ENCODE measurements at regions of chr5 and their contacts with region 1.

Region 1: GRCh38 chr5:64207978-64208377 is 42.3 kb downstream of the RNF180 start:
- DNase-seq: no peak
- ATAC-seq: no peak
- H3K4me3 ChIP-seq: no peak overlapping the region
- H3K27ac ChIP-seq: no peak overlapping the region
- H3K4me1 ChIP-seq: peaks cover 0 to 9% (median 1%) of the 10 kb centered on the region in 9 donors
- H3K27me3 ChIP-seq: no peaks in the 10 kb centered on the region
- CTCF ChIP-seq: peak in 7 of 9 donors; percentile 19 to 58 (median 39)

Region 2: DNA sequence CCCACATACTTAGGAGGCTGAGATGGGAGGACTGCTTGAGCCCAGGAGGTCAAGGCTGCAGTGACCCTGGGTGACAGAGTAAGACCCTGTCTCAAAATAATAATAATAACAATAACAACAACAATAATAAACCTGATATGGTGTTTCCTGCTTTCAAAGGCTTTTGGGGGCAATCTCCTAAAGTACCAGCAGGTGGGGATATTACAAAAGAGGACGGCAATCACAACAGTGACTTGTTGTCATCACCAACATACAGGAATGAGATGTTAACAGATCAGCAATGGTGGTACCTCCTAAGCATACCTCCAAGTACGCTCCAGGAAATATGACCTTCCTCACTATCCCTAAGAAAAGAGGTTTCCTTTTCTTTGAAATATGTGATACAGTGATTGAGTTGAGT is 133.4 kb before region 1 on chr5:
- intact Hi-C with region 1: loop called in 2 of 10 experiments (anchors 5 to 10 kb)
- DNase-seq: no peak
- ATAC-seq: peak in 1 of 8 donors; percentile 41
- H3K4me3 ChIP-seq: no peak overlapping the region
- H3K27ac ChIP-seq: no peak overlapping the region
- H3K4me1 ChIP-seq: no peaks in the 10 kb centered on the region
- H3K27me3 ChIP-seq: no peaks in the 10 kb centered on the region
- CTCF ChIP-seq: peak in 8 of 9 donors; percentile 20 to 65 (median 58)

Region 3: GRCh38 chr5:64147849-64148441 is 60.0 kb before region 1 on chr5:
- intact Hi-C with region 1: loop called (anchors 2 to 10 kb)
- DNase-seq: peak; percentile 44 to 63
- ATAC-seq: peak; percentile 39 to 81 (median 65)
- H3K4me3 ChIP-seq: no peak overlapping the region
- H3K27ac ChIP-seq: no peak overlapping the region
- H3K4me1 ChIP-seq: peaks cover 3 to 28% (median 11%) of the 10 kb centered on the region in 9 donors
- H3K27me3 ChIP-seq: no peaks in the 10 kb centered on the region
- CTCF ChIP-seq: peak; percentile 40 to 88 (median 79)

Region 4: GRCh38 chr5:64161420-64161819 is 46.6 kb before region 1 on chr5:
- intact Hi-C with region 1: loop called in 1 of 10 experiments (anchors 5 kb)
- DNase-seq: no peak
- ATAC-seq: no peak
- H3K4me3 ChIP-seq: no peak overlapping the region
- H3K27ac ChIP-seq: no peak overlapping the region
- H3K4me1 ChIP-seq: peaks cover 0 to 19% (median 8%) of the 10 kb centered on the region in 9 donors
- H3K27me3 ChIP-seq: peaks cover 0 to 31% (median 0%) of the 10 kb centered on the region in 7 donors
- CTCF ChIP-seq: no peak